ENCODE measurements at regions of chr11 and their contacts with region 1.

Region 1: DNA sequence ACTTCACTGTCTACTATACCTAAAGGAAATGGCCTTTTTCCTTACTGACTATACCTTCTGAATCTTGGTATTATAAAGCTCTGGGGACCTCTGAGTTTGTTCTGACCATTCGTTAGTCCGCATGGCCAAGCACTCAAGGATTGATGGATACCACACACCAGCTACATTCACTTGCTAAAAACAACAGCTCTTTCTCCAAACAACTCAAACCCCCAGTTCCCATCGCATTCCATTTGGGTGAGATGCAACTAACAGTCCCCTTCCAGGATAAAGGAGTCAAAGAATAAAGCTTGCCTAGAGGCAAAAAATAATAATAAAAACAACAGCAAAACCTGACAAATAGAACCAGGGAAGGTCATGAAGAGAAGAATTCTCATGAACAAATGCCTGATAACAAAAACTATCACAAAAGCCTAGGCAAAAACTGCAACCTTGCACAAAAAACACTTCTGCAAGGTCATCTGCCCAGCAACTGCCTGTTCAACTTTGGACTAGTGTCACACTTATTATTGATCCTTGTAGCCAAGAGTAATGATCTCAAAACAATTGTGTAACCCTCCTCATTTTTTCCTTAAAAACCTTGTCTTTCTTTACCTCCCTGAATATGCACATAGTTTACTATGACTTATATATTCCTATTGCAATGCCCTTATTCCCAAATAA is 139.0 kb upstream of the GUCY1A2 start:
- DNase-seq: no peak
- ATAC-seq: no peak
- H3K4me3 ChIP-seq: no peak overlapping the region
- H3K27ac ChIP-seq: no peak overlapping the region
- H3K4me1 ChIP-seq: no peaks in the 10 kb centered on the region
- H3K27me3 ChIP-seq: no peaks in the 10 kb centered on the region
- CTCF ChIP-seq: no peak
- POLR2A ChIP-seq: no peak

Region 2: GRCh38 chr11:107140983-107141382 is 16.3 kb before region 1 on chr11:
- in situ Hi-C with region 1: no loop called
- intact Hi-C with region 1: no loop called
- DNase-seq: no peak
- ATAC-seq: no peak
- H3K4me3 ChIP-seq: no peak overlapping the region
- H3K27ac ChIP-seq: no peak overlapping the region
- H3K4me1 ChIP-seq: no peaks in the 10 kb centered on the region
- H3K27me3 ChIP-seq: no peaks in the 10 kb centered on the region
- CTCF ChIP-seq: no peak
- POLR2A ChIP-seq: no peak

Region 3: DNA sequence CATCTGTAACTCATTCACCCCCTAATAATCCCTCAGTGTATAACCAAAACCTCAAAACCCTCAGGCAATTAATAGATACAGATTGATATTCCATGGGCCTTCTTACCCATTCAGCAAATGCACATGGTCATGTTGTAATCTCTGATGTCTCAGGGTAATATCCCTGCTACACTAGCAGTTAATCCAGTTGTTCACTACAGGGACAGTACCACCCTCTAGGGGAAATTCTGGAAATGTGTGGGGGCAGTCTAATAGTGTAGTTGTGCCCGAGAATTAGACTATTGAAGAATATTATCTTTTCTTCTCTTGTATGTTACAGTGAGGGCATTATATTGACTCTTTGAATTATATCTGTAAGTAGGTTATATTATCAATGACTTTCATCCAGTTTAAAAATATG is 124.9 kb after region 1 on chr11:
- in situ Hi-C with region 1: no loop called
- intact Hi-C with region 1: no loop called
- DNase-seq: no peak
- ATAC-seq: no peak
- H3K4me3 ChIP-seq: no peak overlapping the region
- H3K27ac ChIP-seq: no peak overlapping the region
- H3K4me1 ChIP-seq: no peaks in the 10 kb centered on the region
- H3K27me3 ChIP-seq: no peaks in the 10 kb centered on the region
- CTCF ChIP-seq: no peak
- POLR2A ChIP-seq: no peak

Region 4: GRCh38 chr11:107505647-107506225 is 348.5 kb after region 1 on chr11:
- in situ Hi-C with region 1: no loop called
- intact Hi-C with region 1: loop called (anchors 10 kb)
- DNase-seq: no peak
- ATAC-seq: no peak
- H3K4me3 ChIP-seq: no peak overlapping the region
- H3K27ac ChIP-seq: no peak overlapping the region
- H3K4me1 ChIP-seq: peaks cover 10 to 14% of the 10 kb centered on the region in 2 donors
- H3K27me3 ChIP-seq: no peaks in the 10 kb centered on the region
- CTCF ChIP-seq: no peak
- POLR2A ChIP-seq: no peak

Measured in gastrocnemius medialis (tissue), 4 donors.